Activated CD4-positive, alpha-beta memory T cell treated with anti-CD3 and anti-CD28 coated beads for 36 hours (primary cell): ENCODE measurements at regions of chr9 and their contacts with region 1.

Region 1: GRCh38 chr9:99140685-99141314 is 35.9 kb downstream of the TGFBR1 start:
- DNase-seq: peak; percentile 51
- H3K4me3 Mint-ChIP-seq: no peak overlapping the region
- H3K27ac Mint-ChIP-seq: no peak overlapping the region
- H3K4me1 Mint-ChIP-seq: peaks cover 25% of the 10 kb centered on the region
- H3K27me3 Mint-ChIP-seq: no peaks in the 10 kb centered on the region

Region 2: DNA sequence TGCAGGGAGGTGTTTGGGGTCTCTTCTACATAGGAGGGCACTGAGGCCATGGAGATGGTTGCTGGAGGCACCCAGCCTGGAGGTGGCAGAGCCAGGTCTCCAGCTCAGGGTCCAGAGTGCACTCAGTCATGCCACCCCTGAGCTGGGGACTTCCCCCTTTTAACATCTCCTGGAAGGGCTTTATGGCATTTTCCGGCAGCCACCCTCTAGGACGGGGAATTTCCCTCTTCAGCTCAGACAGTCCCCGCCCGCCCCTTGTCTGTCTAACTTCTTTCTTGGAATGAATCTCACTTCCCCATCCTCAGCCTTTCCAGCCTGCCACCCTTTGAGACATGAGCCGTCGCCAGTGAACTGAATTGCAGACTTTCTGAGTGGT is 147.2 kb before region 1 on chr9:
- CTCF ChIA-PET with region 1: interaction called, 163 read pairs
- POLR2A ChIA-PET with region 1: interaction called, 3 read pairs
- intact Hi-C with region 1: no loop called
- DNase-seq: peak; percentile 87
- H3K4me3 Mint-ChIP-seq: no peak overlapping the region
- H3K27ac Mint-ChIP-seq: peak overlapping the region; percentile 39
- H3K4me1 Mint-ChIP-seq: peaks cover 16% of the 10 kb centered on the region
- H3K27me3 Mint-ChIP-seq: peaks cover 8% of the 10 kb centered on the region

Region 3: GRCh38 chr9:98998441-98999151 is 142.2 kb before region 1 on chr9:
- CTCF ChIA-PET with region 1: interaction called, 163 read pairs
- POLR2A ChIA-PET with region 1: interaction called, 3 read pairs
- intact Hi-C with region 1: loop called (anchors 1 kb)
- DNase-seq: peak; percentile 73
- H3K4me3 Mint-ChIP-seq: no peak overlapping the region
- H3K27ac Mint-ChIP-seq: no peak overlapping the region
- H3K4me1 Mint-ChIP-seq: peaks cover 23% of the 10 kb centered on the region
- H3K27me3 Mint-ChIP-seq: peaks cover 7% of the 10 kb centered on the region

Region 4: GRCh38 chr9:99012942-99013512 is 127.8 kb before region 1 on chr9:
- CTCF ChIA-PET with region 1: interaction called, 12 read pairs
- POLR2A ChIA-PET with region 1: no interaction called
- intact Hi-C with region 1: no loop called
- DNase-seq: peak; percentile 32
- H3K4me3 Mint-ChIP-seq: no peak overlapping the region
- H3K27ac Mint-ChIP-seq: peak overlapping the region; percentile 55
- H3K4me1 Mint-ChIP-seq: peaks cover 18% of the 10 kb centered on the region
- H3K27me3 Mint-ChIP-seq: no peaks in the 10 kb centered on the region

Region 5: DNA sequence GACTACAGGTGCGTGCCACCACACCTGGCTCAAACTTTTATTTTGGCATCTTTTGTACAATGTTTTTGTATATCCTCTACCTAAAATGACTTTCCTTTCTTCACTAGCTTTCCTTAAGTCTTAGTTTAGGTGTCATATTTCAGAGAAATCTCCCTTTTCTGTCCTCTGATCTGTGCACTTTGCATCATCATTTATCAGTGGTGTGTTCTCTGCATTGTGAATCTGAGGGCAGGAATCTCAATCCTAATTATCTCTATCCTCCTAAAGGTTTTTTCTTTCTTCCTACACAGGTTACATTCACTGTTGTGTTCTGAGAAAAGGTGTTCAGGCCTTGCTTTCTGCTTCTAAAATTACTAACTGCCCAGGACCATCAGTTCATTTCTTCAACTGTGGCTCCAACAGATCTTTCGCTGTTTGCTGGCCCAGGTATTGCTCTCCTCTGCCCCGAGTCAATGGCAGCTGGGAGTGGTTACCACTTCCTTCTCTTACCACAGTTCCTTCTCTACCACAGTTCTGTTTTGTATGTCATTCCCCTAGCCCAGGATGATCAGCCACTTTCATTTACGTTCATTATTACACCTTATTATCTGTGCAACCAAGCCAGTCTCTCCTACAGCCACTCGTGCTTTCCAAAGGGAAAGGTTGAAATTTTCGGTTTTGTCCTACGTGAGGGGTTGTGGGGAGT is 21.9 kb before region 1 on chr9:
- CTCF ChIA-PET with region 1: interaction called, 11 read pairs
- POLR2A ChIA-PET with region 1: interaction called, 3 read pairs
- intact Hi-C with region 1: no loop called
- DNase-seq: peak; percentile 75
- H3K4me3 Mint-ChIP-seq: peak overlapping the region; percentile 61
- H3K27ac Mint-ChIP-seq: peak overlapping the region; percentile 88
- H3K4me1 Mint-ChIP-seq: peaks cover 77% of the 10 kb centered on the region
- H3K27me3 Mint-ChIP-seq: no peaks in the 10 kb centered on the region